Activated T-helper 1 cell treated with anti-CD3 and anti-CD28 coated beads, Interleukin-12 subunit alpha, Interleukin-12 subunit beta, Interleukin-2, Interleukin-4 antibody, amounts not matched to agents 30 ng/mL and 10 ng/mL and 1 ng/mL, durations not matched to agents 14 hours and 24 hours and 36 hours (primary cell): ENCODE measurements at regions of chr10 and their contacts with region 1.

Region 1: DNA sequence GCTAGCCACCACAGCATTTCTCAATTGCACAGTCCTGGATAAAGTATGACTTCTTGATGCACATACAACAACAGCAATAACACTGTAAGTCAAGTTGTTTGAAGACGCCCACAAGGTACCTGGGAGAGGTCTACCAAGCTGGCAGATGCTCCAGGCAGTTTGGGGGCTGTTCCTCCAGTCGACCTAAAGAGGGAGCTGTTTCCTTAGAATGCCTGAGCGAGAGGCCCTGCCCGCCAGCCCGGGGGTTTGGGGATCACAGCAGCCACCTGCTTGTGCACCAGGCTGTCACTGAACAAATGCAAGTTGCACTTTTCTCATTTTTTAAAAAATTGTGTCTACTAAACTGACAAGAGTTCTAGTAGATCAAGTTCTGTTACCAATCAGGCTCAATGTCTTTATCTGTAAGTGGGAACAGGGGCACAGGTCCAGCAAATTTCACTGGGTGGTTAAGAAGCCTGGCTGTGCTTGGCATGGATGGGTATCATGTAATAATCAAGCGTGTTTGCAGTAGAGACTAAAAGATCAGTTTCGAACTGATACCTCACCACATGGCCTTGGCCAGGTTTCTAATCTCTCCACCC is 193.8 kb upstream of the ADO start:
- DNase-seq: peak; percentile 65
- H3K4me3 Mint-ChIP-seq: no peak overlapping the region
- H3K27ac Mint-ChIP-seq: peak overlapping the region; percentile 11
- H3K4me1 Mint-ChIP-seq: peaks cover 59% of the 10 kb centered on the region
- H3K27me3 Mint-ChIP-seq: peaks cover 9% of the 10 kb centered on the region

Region 2: DNA sequence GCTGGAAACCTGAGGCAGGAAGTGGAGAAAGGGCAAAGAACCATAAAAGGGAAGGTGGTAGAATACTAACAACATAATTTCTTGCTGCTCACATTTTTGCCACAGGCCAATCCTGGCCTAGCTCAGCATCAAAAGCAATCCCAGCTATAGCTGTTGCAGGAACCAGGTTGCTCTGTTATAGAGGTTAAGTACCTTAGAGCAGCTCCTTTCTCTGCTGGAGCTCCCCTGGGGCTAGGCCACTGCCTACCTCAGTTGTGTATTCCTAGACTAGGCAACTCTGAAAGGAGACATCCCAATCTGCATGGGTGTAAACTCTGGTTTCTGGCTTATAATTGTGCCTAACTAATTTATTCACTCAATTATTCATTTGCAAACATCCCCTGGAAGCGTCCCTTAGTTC is 128.2 kb before region 1 on chr10:
- intact Hi-C with region 1: no loop called
- DNase-seq: no peak
- H3K4me3 Mint-ChIP-seq: no peak overlapping the region
- H3K27ac Mint-ChIP-seq: no peak overlapping the region
- H3K4me1 Mint-ChIP-seq: no peaks in the 10 kb centered on the region
- H3K27me3 Mint-ChIP-seq: peaks cover 17% of the 10 kb centered on the region

Region 3: DNA sequence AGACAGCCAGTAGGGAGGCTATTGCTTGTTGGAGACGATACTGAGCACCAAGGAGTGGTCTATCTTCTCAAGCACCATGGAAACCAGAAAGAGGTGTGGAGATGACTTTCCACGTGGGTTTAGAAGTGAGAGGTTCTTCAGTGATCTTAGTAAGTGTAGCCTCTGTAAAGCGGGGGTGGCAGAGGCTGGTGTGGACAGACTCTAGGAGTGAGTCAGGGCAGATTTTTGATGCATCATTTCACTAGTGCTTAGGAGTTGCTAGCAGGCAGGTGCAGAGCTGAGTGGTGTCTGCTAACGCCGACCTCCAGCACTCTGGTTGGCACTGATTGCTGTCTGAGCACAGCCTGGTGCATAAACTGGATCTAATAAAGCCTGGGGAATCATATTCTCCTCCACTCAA is 115.4 kb after region 1 on chr10:
- intact Hi-C with region 1: loop called (anchors 1 kb)
- DNase-seq: peak; percentile 16
- H3K4me3 Mint-ChIP-seq: peak overlapping the region; percentile 25
- H3K27ac Mint-ChIP-seq: peak overlapping the region; percentile 72
- H3K4me1 Mint-ChIP-seq: peaks cover 52% of the 10 kb centered on the region
- H3K27me3 Mint-ChIP-seq: peaks cover 8% of the 10 kb centered on the region

Region 4: GRCh38 chr10:62779487-62780248 is 168.9 kb after region 1 on chr10:
- intact Hi-C with region 1: loop called (anchors 1 kb)
- DNase-seq: peak; percentile 48
- H3K4me3 Mint-ChIP-seq: peak overlapping the region; percentile 27
- H3K27ac Mint-ChIP-seq: peak overlapping the region; percentile 76
- H3K4me1 Mint-ChIP-seq: peaks cover 45% of the 10 kb centered on the region
- H3K27me3 Mint-ChIP-seq: peaks cover 19% of the 10 kb centered on the region

Region 5: GRCh38 chr10:62804356-62805230 is 193.9 kb after region 1 on chr10 and contains the start of gene ADO:
- intact Hi-C with region 1: loop called (anchors 1 kb)
- DNase-seq: peak; percentile 68
- H3K4me3 Mint-ChIP-seq: peak within 1 kb of the TSS; percentile 90
- H3K27ac Mint-ChIP-seq: peak within 1 kb of the TSS; percentile 95
- H3K4me1 Mint-ChIP-seq: peaks cover 41% of the 10 kb centered on the region
- H3K27me3 Mint-ChIP-seq: peaks cover 11% of the 10 kb centered on the region
- total RNA-seq, gene ADO: 52.3 and 55.8 TPM in 2 replicates

Region 6: DNA sequence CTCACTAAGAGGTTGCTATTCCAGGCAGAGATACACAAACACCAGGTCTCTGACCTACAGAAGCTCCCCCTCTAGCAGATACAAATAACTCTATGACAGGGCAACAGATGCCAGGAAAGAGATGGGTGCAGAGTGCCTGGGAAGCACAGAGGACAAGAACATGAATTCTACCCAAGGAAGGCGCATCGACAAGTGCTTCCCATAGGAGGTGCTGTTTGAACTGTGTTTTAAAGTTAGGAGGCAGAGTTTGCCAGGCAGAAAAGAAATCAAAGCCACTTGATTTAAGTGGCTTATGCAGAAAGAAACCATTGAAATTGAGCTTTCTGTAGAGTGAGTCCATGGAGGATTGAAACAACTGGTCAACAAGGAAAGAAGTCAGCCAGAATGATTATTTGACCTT is 240.7 kb after region 1 on chr10:
- intact Hi-C with region 1: loop called (anchors 1 kb)
- DNase-seq: no peak
- H3K4me3 Mint-ChIP-seq: no peak overlapping the region
- H3K27ac Mint-ChIP-seq: peak overlapping the region; percentile 9
- H3K4me1 Mint-ChIP-seq: peaks cover 51% of the 10 kb centered on the region
- H3K27me3 Mint-ChIP-seq: peaks cover 5% of the 10 kb centered on the region

Region 7: GRCh38 chr10:62992145-62992721 is 381.5 kb after region 1 on chr10:
- intact Hi-C with region 1: loop called (anchors 2 kb)
- DNase-seq: no peak
- H3K4me3 Mint-ChIP-seq: peak overlapping the region; percentile 58
- H3K27ac Mint-ChIP-seq: peak overlapping the region; percentile 94
- H3K4me1 Mint-ChIP-seq: peaks cover 52% of the 10 kb centered on the region
- H3K27me3 Mint-ChIP-seq: peaks cover 4% of the 10 kb centered on the region

Region 8: GRCh38 chr10:63083904-63084689 is 473.4 kb after region 1 on chr10:
- intact Hi-C with region 1: loop called (anchors 1 kb)
- DNase-seq: peak; percentile 14
- H3K4me3 Mint-ChIP-seq: no peak overlapping the region
- H3K27ac Mint-ChIP-seq: no peak overlapping the region
- H3K4me1 Mint-ChIP-seq: peaks cover 12% of the 10 kb centered on the region
- H3K27me3 Mint-ChIP-seq: peaks cover 28% of the 10 kb centered on the region